ENCODE measurements at regions of chr14 and their contacts with region 1.

Region 1: GRCh38 chr14:25444381-25444780 is 394.4 kb upstream of the STXBP6 start:
- DNase-seq: no peak
- H3K4me3 ChIP-seq: no peak overlapping the region
- H3K27ac ChIP-seq: no peak overlapping the region
- H3K4me1 ChIP-seq: no peaks in the 10 kb centered on the region
- H3K27me3 ChIP-seq: no peaks in the 10 kb centered on the region
- CTCF ChIP-seq: no peak
- EP300 ChIP-seq: no peak
- POLR2A ChIP-seq: no peak
- RAD21 ChIP-seq: no peak

Region 2: DNA sequence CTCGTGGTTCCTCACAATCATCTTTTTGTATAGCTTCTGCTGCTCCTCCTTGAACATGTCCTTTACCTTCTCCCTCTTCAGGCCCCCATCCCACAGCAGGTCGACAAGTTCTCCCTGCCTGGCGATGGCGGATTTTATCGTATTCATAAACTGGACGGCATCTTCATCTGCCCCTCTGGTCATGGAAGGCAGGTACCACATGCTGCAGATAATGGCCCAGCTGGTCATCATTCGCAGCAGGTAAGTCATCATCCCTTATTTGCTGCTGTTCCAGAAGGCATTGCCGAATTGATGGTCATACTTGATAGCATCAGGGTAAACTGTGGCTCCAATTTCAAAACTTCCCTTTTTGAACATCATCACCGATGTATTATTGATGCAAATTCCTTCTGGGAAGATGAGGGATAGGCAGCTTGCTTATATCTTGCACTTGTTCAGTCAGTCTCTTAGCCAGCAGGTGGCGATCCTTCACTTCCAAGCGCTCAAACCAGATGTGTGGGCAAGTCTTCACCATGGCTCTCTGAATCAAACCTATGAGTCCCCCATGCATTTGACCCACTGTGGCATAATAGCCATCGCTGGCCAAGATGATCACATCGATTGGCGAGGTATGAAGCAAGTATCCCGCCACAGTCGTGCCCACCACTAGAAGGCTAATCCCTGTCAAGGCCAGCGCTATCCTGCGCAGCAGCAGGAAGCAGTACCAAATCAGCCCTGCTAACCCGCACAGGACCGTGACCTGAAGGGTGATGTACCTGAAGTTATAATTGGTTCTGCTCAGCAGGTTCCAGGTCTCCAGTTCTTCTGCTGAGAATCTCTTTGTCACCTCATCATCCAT is 13.0 kb before region 1 on chr14:
- CTCF ChIA-PET with region 1: interaction called, 21 read pairs
- POLR2A ChIA-PET with region 1: no interaction called
- DNase-seq: peak; percentile 15 to 65
- H3K4me3 ChIP-seq: no peak overlapping the region
- H3K27ac ChIP-seq: no peak overlapping the region
- H3K4me1 ChIP-seq: no peaks in the 10 kb centered on the region
- H3K27me3 ChIP-seq: no peaks in the 10 kb centered on the region
- CTCF ChIP-seq: peak; percentile 43 to 69 (median 61)
- EP300 ChIP-seq: no peak
- POLR2A ChIP-seq: no peak
- RAD21 ChIP-seq: peak; percentile 72 to 78

Measured in H1 (cell line).